Posterior vena cava (tissue), 2 donors: ENCODE measurements at regions of chr19 and their contacts with region 1.

Region 1: GRCh38 chr19:13526552-13526951 is 20.3 kb upstream of the CACNA1A start:
- DNase-seq: no peak

Region 2: DNA sequence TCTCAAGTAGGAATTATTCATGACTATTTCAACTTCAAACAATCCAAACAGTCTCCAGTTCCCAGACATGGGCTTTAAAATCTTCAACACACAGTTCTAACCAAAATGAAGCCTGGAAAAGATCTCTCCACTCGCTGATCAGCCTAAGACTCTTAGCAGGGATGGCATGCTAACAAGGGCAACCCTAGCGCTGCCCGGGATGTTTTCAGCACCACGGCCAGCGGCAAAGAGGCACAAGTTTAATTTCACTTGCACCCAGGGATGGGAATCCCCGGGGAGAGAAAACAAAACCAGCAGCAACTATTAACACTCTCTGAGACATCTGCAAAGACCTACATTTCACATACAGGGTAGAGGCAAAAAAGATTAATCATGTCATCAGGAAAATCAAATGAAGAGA is 63.3 kb before region 1 on chr19:
- intact Hi-C with region 1: loop called in 1 of 2 experiments (anchors 2 kb)
- DNase-seq: no peak